CD8-positive, alpha-beta T cell (primary cell): ENCODE measurements at regions of chr14 and their contacts with region 1.

Region 1: GRCh38 chr14:68911594-68912227 is 67.4 kb downstream of the ACTN1 start:
- DNase-seq: peak; percentile 52 to 86 (median 80)
- ATAC-seq: peak; percentile 98
- H3K4me3 ChIP-seq: no peak overlapping the region
- H3K4me3 Mint-ChIP-seq: no peak overlapping the region
- H3K27ac ChIP-seq: no peak overlapping the region
- H3K27ac Mint-ChIP-seq: peak overlapping the region; percentile 46
- H3K4me1 ChIP-seq: peaks cover 29% of the 10 kb centered on the region
- H3K4me1 Mint-ChIP-seq: peaks cover 39% of the 10 kb centered on the region
- H3K27me3 ChIP-seq: no peaks in the 10 kb centered on the region
- H3K27me3 Mint-ChIP-seq: no peaks in the 10 kb centered on the region
- CTCF ChIP-seq: peak; percentile 98

Region 2: DNA sequence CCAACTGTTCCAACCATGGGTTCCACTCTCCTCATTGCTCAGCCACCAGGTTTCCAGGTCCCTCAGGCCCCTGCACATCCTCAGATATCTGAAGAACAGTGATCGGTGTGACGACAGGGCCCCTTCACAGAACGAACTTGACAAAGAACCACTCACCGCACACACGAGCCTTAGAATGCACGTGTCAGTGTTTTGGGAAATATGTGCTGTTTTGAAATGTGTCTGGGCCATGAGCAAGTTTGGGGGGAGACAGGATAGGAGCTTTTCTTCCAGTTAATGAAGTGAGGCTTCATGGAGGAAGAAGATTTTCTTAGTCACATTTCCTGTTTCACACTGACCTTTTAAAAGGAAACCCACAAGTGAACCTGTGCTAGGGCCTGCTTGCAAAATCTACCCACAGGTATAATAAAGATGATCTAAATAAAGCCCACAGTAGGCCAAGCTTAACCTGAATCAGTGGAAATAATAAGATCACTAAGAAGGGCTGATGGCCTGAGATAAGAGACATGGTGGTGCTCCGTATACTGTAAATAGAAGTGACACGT is 177.4 kb before region 1 on chr14:
- CTCF ChIA-PET with region 1: no interaction called
- POLR2A ChIA-PET with region 1: no interaction called
- intact Hi-C with region 1: no loop called
- DNase-seq: peak in 8 of 9 experiments; percentile 11 to 69 (median 51)
- ATAC-seq: peak; percentile 81
- H3K4me3 ChIP-seq: no peak overlapping the region
- H3K4me3 Mint-ChIP-seq: peak overlapping the region; percentile 19
- H3K27ac ChIP-seq: peak overlapping the region in 1 of 2 experiments; percentile 76
- H3K27ac Mint-ChIP-seq: peak overlapping the region; percentile 87
- H3K4me1 ChIP-seq: peaks cover 21% of the 10 kb centered on the region
- H3K4me1 Mint-ChIP-seq: peaks cover 34% of the 10 kb centered on the region
- H3K27me3 ChIP-seq: no peaks in the 10 kb centered on the region
- H3K27me3 Mint-ChIP-seq: no peaks in the 10 kb centered on the region
- CTCF ChIP-seq: no peak

Region 3: DNA sequence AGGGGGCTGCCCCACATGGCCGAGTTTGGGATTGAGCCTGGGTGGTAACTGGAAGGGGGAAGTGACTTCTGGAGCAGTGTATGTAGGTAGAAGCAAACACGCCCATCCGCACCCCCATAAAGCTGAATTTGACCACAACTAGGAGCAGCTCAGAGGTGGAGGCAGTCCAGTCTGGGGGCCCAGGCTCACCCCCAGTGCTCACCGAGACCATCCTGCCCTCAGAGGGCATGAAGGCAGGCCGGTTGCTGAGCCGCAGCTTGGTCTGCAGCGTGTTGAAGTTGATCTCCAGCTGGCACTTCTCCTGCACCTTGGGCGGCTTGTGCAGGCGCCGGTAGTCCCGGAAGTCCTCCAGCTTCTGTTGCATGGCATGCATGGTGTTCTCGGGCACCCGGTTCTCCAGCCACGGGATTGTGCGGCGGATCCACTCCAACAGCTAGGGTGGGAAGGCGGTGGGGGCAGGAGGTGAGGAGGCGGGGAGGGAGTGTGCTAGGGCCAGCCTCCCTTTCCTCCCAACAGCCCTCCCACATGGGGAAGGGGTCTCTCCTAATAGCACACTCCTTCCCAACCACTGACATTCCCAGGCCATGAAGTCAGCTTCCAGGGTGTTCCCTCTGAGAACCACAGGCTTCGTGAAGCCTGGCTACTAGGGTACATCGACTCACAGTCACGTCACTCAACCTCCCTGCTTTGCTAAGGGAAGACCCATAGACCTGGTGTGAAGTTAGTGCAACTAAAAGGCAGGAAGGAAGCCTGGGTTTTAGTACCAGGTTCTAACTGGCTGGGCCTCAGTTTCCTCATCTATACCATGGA is 19.7 kb before region 1 on chr14:
- CTCF ChIA-PET with region 1: interaction called, 16 read pairs
- POLR2A ChIA-PET with region 1: no interaction called
- intact Hi-C with region 1: no loop called
- DNase-seq: no peak
- ATAC-seq: no peak
- H3K4me3 ChIP-seq: no peak overlapping the region
- H3K4me3 Mint-ChIP-seq: no peak overlapping the region
- H3K27ac ChIP-seq: no peak overlapping the region
- H3K27ac Mint-ChIP-seq: no peak overlapping the region
- H3K4me1 ChIP-seq: no peaks in the 10 kb centered on the region
- H3K4me1 Mint-ChIP-seq: no peaks in the 10 kb centered on the region
- H3K27me3 ChIP-seq: no peaks in the 10 kb centered on the region
- H3K27me3 Mint-ChIP-seq: no peaks in the 10 kb centered on the region
- CTCF ChIP-seq: no peak

Region 4: GRCh38 chr14:68926236-68926635 is 14.5 kb after region 1 on chr14:
- CTCF ChIA-PET with region 1: interaction called, 67 read pairs
- POLR2A ChIA-PET with region 1: interaction called, 4 read pairs
- intact Hi-C with region 1: no loop called
- DNase-seq: peak in 1 of 9 experiments; percentile 36
- ATAC-seq: no peak
- H3K4me3 ChIP-seq: no peak overlapping the region
- H3K4me3 Mint-ChIP-seq: no peak overlapping the region
- H3K27ac ChIP-seq: no peak overlapping the region
- H3K27ac Mint-ChIP-seq: peak overlapping the region; percentile 86
- H3K4me1 ChIP-seq: peaks cover 81% of the 10 kb centered on the region
- H3K4me1 Mint-ChIP-seq: peaks cover 73% of the 10 kb centered on the region
- H3K27me3 ChIP-seq: no peaks in the 10 kb centered on the region
- H3K27me3 Mint-ChIP-seq: no peaks in the 10 kb centered on the region
- CTCF ChIP-seq: peak; percentile 21

Region 5: DNA sequence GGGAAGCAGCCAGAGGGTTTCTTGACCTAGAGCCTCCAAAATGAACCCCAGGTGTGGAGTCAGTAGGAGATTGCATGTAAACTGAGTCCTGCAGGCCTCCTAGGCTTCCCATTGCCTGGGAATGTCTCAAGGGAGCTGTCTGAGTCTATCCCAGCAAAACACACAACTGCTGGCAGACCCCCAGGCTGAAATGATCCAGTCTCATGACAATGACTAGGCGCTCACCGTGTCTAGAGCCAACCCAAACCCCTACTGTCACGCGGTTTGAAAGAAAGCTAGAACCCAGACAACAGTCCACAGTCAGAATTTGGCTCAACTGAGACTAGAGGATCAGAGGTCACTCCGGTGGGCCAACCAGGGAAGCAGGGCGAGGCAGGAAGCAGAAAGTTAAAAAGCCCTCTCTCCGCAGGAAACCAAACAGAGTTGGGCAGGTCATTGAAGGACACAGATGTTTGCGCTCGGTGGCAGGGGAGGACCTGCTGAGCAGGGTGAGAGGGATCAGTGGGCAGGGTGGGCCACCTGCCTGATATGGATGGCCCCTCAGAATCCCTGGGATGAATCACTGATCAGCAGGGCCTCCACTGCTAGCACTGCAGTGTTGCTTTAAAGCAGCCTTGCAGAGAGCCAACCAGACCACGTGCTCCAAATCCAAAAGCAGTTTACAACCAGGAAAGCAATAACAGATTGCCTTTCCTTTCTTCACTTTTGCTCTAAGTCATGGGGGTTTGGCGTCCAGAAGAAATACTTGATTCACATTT is 43.6 kb after region 1 on chr14:
- CTCF ChIA-PET with region 1: interaction called, 14 read pairs
- POLR2A ChIA-PET with region 1: interaction called, 3 read pairs
- intact Hi-C with region 1: no loop called
- DNase-seq: no peak
- ATAC-seq: peak; percentile 18
- H3K4me3 ChIP-seq: peak overlapping the region in 1 of 2 experiments; percentile 18
- H3K4me3 Mint-ChIP-seq: peak overlapping the region; percentile 58
- H3K27ac ChIP-seq: peak overlapping the region; percentile 19 to 36
- H3K27ac Mint-ChIP-seq: peak overlapping the region; percentile 83
- H3K4me1 ChIP-seq: peaks cover 95% of the 10 kb centered on the region
- H3K4me1 Mint-ChIP-seq: peaks cover 88% of the 10 kb centered on the region
- H3K27me3 ChIP-seq: no peaks in the 10 kb centered on the region
- H3K27me3 Mint-ChIP-seq: no peaks in the 10 kb centered on the region
- CTCF ChIP-seq: no peak

Region 6: GRCh38 chr14:68986926-68987652 is 75.4 kb after region 1 on chr14:
- CTCF ChIA-PET with region 1: interaction called, 14 read pairs
- POLR2A ChIA-PET with region 1: interaction called, 3 read pairs
- intact Hi-C with region 1: loop called in 1 of 2 experiments (anchors 1 kb)
- DNase-seq: peak in 1 of 9 experiments; percentile 23
- ATAC-seq: peak; percentile 90
- H3K4me3 ChIP-seq: no peak overlapping the region
- H3K4me3 Mint-ChIP-seq: no peak overlapping the region
- H3K27ac ChIP-seq: no peak overlapping the region
- H3K27ac Mint-ChIP-seq: no peak overlapping the region
- H3K4me1 ChIP-seq: no peaks in the 10 kb centered on the region
- H3K4me1 Mint-ChIP-seq: peaks cover 11% of the 10 kb centered on the region
- H3K27me3 ChIP-seq: no peaks in the 10 kb centered on the region
- H3K27me3 Mint-ChIP-seq: no peaks in the 10 kb centered on the region
- CTCF ChIP-seq: no peak

Region 7: GRCh38 chr14:69055999-69056788 is 144.5 kb after region 1 on chr14:
- CTCF ChIA-PET with region 1: interaction called, 18 read pairs
- POLR2A ChIA-PET with region 1: no interaction called
- intact Hi-C with region 1: loop called (anchors 1 to 2 kb)
- DNase-seq: peak in 4 of 9 experiments; percentile 16 to 48 (median 28)
- ATAC-seq: peak; percentile 64
- H3K4me3 ChIP-seq: no peak overlapping the region
- H3K4me3 Mint-ChIP-seq: no peak overlapping the region
- H3K27ac ChIP-seq: no peak overlapping the region
- H3K27ac Mint-ChIP-seq: peak overlapping the region; percentile 1
- H3K4me1 ChIP-seq: no peaks in the 10 kb centered on the region
- H3K4me1 Mint-ChIP-seq: peaks cover 13% of the 10 kb centered on the region
- H3K27me3 ChIP-seq: no peaks in the 10 kb centered on the region
- H3K27me3 Mint-ChIP-seq: no peaks in the 10 kb centered on the region
- CTCF ChIP-seq: no peak

Region 8: GRCh38 chr14:69107407-69108003 is 195.8 kb after region 1 on chr14:
- CTCF ChIA-PET with region 1: interaction called, 13 read pairs
- POLR2A ChIA-PET with region 1: no interaction called
- intact Hi-C with region 1: loop called (anchors 1 kb)
- DNase-seq: peak in 5 of 9 experiments; percentile 20 to 66 (median 53)
- ATAC-seq: peak; percentile 62
- H3K4me3 ChIP-seq: no peak overlapping the region
- H3K4me3 Mint-ChIP-seq: no peak overlapping the region
- H3K27ac ChIP-seq: no peak overlapping the region
- H3K27ac Mint-ChIP-seq: no peak overlapping the region
- H3K4me1 ChIP-seq: no peaks in the 10 kb centered on the region
- H3K4me1 Mint-ChIP-seq: no peaks in the 10 kb centered on the region
- H3K27me3 ChIP-seq: no peaks in the 10 kb centered on the region
- H3K27me3 Mint-ChIP-seq: no peaks in the 10 kb centered on the region
- CTCF ChIP-seq: peak; percentile 36

Region 9: GRCh38 chr14:69574263-69574953 is 662.7 kb after region 1 on chr14 and contains the start of gene CCDC177:
- CTCF ChIA-PET with region 1: no interaction called
- POLR2A ChIA-PET with region 1: no interaction called
- intact Hi-C with region 1: no loop called
- DNase-seq: peak; percentile 48 to 85 (median 74)
- ATAC-seq: peak; percentile 85
- H3K4me3 ChIP-seq: peak within 1 kb of the TSS; percentile 38 to 61
- H3K4me3 Mint-ChIP-seq: peak within 1 kb of the TSS; percentile 83
- H3K27ac ChIP-seq: no peak within 1 kb of the TSS
- H3K27ac Mint-ChIP-seq: no peak within 1 kb of the TSS
- H3K4me1 ChIP-seq: peaks cover 19% of the 10 kb centered on the region
- H3K4me1 Mint-ChIP-seq: peaks cover 12% of the 10 kb centered on the region
- H3K27me3 ChIP-seq: peaks cover 15 to 18% of the 10 kb centered on the region in 2 experiments
- H3K27me3 Mint-ChIP-seq: peaks cover 39% of the 10 kb centered on the region
- CTCF ChIP-seq: peak; percentile 96
- total RNA-seq, gene CCDC177: not detected